ENCODE measurements at regions of chr7 and their contacts with region 1.

Region 1: DNA sequence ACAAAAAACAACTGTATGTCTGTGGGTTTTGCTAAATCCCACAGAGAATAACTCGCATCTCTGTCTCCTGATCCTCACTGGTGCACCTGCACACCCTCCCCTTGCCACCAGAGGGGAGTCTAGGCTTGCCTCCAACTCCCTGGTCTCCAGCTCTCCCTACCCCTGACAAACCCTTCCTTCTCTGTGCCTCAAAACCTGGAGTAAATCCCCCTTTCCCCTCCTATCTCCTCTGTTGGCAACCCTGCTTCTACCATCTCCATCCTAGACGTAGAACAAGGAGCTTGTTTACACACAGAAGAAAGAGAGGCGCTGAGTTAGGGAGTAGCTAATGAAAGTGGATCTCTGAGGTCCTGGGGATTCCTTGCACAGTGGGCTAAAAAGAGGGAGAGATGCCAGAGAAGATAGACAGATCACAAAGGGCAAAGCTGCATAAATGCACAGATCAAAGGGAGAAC is 6.0 kb downstream of the MBLAC1 start:
- DNase-seq: peak; percentile 81
- H3K4me3 ChIP-seq: no peak overlapping the region
- H3K27ac ChIP-seq: no peak overlapping the region
- H3K4me1 ChIP-seq: peaks cover 5% of the 10 kb centered on the region
- H3K27me3 ChIP-seq: no peaks in the 10 kb centered on the region
- CTCF ChIP-seq: peak; percentile 91

Region 2: GRCh38 chr7:99975782-99976521 is 156.8 kb before region 1 on chr7 and contains the start of gene AZGP1:
- CTCF ChIA-PET with region 1: no interaction called
- POLR2A ChIA-PET with region 1: no interaction called
- intact Hi-C with region 1: loop called (anchors 5 kb)
- DNase-seq: no peak
- H3K4me3 ChIP-seq: no peak within 1 kb of the TSS
- H3K27ac ChIP-seq: no peak within 1 kb of the TSS
- H3K4me1 ChIP-seq: no peaks in the 10 kb centered on the region
- H3K27me3 ChIP-seq: peaks cover 11% of the 10 kb centered on the region
- CTCF ChIP-seq: no peak
- total RNA-seq, gene AZGP1: not detected in 2 replicates

Region 3: GRCh38 chr7:99990460-99990852 is 142.3 kb before region 1 on chr7:
- CTCF ChIA-PET with region 1: interaction called, 3 read pairs
- POLR2A ChIA-PET with region 1: no interaction called
- intact Hi-C with region 1: loop called (anchors 5 kb)
- DNase-seq: no peak
- H3K4me3 ChIP-seq: peak overlapping the region; percentile 19
- H3K27ac ChIP-seq: no peak overlapping the region
- H3K4me1 ChIP-seq: no peaks in the 10 kb centered on the region
- H3K27me3 ChIP-seq: no peaks in the 10 kb centered on the region
- CTCF ChIP-seq: no peak

Region 4: GRCh38 chr7:100215895-100216294 is 83.2 kb after region 1 on chr7:
- CTCF ChIA-PET with region 1: no interaction called
- POLR2A ChIA-PET with region 1: no interaction called
- intact Hi-C with region 1: loop called (anchors 2 kb)
- DNase-seq: no peak
- H3K4me3 ChIP-seq: no peak overlapping the region
- H3K27ac ChIP-seq: no peak overlapping the region
- H3K4me1 ChIP-seq: no peaks in the 10 kb centered on the region
- H3K27me3 ChIP-seq: no peaks in the 10 kb centered on the region
- CTCF ChIP-seq: no peak

Region 5: DNA sequence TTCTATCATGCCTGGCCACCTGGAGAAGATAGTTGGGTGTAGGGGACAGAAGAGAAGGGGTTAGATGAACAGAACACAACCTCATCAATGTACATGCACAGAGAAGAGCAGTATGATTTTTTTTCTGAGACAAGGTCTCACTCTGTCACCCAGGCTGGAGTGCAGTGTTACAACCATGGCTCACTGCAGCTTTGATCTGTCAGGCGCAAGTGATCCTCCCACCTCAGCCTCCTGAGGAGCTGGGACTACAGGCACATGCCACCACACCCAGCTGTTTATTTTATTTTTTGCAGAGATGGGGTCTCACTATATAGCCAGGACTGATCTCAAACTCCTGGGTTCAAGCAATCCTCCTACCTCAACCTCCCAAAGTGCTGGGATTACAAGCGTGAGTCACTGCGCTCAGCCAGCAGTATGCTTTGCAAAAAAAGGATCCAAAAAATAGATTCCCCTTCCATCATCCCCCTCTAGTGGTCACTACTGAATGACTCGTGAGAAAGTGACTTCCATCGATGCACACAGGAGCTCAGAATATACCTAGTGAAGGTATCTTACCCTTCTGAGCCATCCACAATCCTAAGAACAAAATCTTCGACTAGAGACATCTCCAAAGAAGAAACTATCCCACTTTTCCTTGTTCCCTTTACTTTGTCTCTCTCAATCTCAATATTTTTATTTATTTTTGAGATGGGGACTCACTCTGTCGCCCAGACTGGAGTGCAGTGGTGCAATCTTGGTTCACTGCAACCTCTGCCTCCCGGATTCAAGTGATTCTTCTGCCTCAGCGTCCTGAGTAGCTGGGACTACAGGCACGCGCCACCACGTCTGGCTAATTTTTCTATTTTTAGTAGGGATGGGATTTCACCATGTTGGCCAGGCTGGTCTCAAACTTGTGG is 274.8 kb after region 1 on chr7:
- CTCF ChIA-PET with region 1: interaction called, 3 read pairs
- POLR2A ChIA-PET with region 1: no interaction called
- intact Hi-C with region 1: loop called (anchors 5 kb)
- DNase-seq: peak; percentile 80
- H3K4me3 ChIP-seq: no peak overlapping the region
- H3K27ac ChIP-seq: no peak overlapping the region
- H3K4me1 ChIP-seq: no peaks in the 10 kb centered on the region
- H3K27me3 ChIP-seq: peaks cover 9% of the 10 kb centered on the region
- CTCF ChIP-seq: peak; percentile 70

Region 6: DNA sequence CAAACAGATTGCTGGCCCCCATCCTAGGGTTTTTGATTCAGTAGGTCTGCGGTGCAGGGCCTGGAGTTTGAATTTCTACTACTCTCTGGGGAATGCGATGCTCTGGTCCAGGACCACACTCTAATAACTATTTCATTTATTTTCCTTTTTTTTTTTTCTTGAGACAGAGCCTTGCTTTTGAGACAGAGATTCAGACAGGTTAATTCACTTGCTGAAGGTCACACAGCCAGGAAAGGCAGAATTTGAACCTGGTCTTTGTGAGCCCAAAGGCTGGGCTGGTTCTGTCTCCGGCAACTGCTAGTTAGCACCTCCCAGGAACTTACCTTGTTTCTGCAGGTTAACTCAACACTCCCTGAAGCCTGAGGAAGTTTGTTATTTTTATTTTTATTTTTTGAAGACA is 319.8 kb after region 1 on chr7:
- CTCF ChIA-PET with region 1: interaction called, 13 read pairs
- POLR2A ChIA-PET with region 1: no interaction called
- intact Hi-C with region 1: no loop called
- DNase-seq: no peak
- H3K4me3 ChIP-seq: no peak overlapping the region
- H3K27ac ChIP-seq: no peak overlapping the region
- H3K4me1 ChIP-seq: no peaks in the 10 kb centered on the region
- H3K27me3 ChIP-seq: no peaks in the 10 kb centered on the region
- CTCF ChIP-seq: no peak

Region 7: GRCh38 chr7:101235050-101235449 is 1102.3 kb after region 1 on chr7:
- CTCF ChIA-PET with region 1: no interaction called
- POLR2A ChIA-PET with region 1: no interaction called
- intact Hi-C with region 1: no loop called
- DNase-seq: no peak
- H3K4me3 ChIP-seq: no peak overlapping the region
- H3K27ac ChIP-seq: no peak overlapping the region
- H3K4me1 ChIP-seq: no peaks in the 10 kb centered on the region
- H3K27me3 ChIP-seq: no peaks in the 10 kb centered on the region
- CTCF ChIP-seq: no peak; the same call in 1 of the 2 replicates